ENCODE measurements at regions of chr18 and their contacts with region 1.

Region 1: DNA sequence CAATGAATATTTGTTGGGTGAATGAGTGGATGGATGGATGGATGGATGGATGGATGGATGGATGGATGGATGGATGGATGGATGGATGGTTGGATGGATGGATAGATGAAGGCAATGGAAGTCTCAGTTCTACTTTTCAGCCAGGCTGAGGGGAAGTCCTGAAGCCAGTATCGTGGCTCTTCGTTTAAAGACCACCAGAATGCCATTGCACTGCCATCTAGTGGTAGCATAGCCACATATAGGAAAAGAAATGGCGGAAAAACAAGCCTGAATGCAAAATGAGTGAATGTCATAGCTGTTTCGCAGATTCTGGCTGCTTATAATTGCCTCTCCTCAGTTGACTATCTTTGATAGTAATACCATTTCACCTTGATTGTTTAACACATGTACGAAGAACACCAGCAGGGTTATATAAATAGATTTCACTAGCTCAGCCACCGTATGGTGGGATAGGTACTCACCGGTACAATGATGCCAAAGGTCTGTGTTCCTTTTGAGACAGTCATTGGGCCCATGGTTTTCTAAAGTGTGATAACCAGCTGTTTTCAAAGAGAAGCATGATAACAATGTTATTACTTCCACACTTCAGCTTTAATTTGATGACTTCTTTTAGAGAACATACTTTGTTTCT is 62.3 kb upstream of the GREB1L start:
- DNase-seq: peak; percentile 58
- ATAC-seq: peak; percentile 87
- H3K4me3 ChIP-seq: no peak overlapping the region
- H3K27ac ChIP-seq: no peak overlapping the region
- H3K4me1 ChIP-seq: peaks cover 7 to 12% of the 10 kb centered on the region in 2 experiments; a peak in 3 of 4 replicates
- H3K27me3 ChIP-seq: no peaks in the 10 kb centered on the region
- CTCF ChIP-seq: peak; percentile 50 to 83 (median 77); a peak in 5 of 6 replicates
- POLR2A ChIP-seq: no peak
- RAD21 ChIP-seq: peak; percentile 78

Region 2: DNA sequence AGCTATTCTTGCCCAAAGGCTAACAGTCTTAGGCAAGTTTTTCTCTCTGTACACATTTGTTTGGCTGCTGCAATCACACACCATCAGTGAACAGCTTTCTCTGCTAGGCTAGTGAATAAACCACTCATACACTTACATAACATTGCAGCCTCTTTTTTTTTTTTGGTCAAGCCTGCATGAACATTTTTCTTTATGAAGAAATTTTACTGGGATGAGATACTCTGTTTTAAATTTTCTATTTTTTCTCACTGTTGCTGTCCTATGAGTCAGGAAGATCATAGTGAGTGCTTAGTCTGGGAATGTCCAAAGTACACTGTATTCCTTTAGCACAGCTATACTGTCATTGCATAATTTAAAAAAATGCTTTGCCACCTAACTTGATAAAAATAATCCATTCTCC is 126.6 kb before region 1 on chr18:
- CTCF ChIA-PET with region 1: interaction called, 3 read pairs
- POLR2A ChIA-PET with region 1: no interaction called
- RAD21 ChIA-PET with region 1: no interaction called
- intact Hi-C with region 1: loop called (anchors 10 kb)
- DNase-seq: no peak
- ATAC-seq: no peak
- H3K4me3 ChIP-seq: no peak overlapping the region
- H3K27ac ChIP-seq: no peak overlapping the region
- H3K4me1 ChIP-seq: no peaks in the 10 kb centered on the region
- H3K27me3 ChIP-seq: no peaks in the 10 kb centered on the region
- CTCF ChIP-seq: no peak
- POLR2A ChIP-seq: no peak
- RAD21 ChIP-seq: no peak